ENCODE measurements at regions of chr4 and their contacts with region 1.

Region 1: GRCh38 chr4:127788517-127788916 is 6.4 kb downstream of the HSPA4L start:
- DNase-seq: no peak
- H3K4me3 ChIP-seq: no peak overlapping the region
- H3K27ac ChIP-seq: no peak overlapping the region
- H3K4me1 ChIP-seq: peaks cover 0 to 10% (median 0%) of the 10 kb centered on the region in 4 donors
- H3K27me3 ChIP-seq: no peaks in the 10 kb centered on the region
- CTCF ChIP-seq: no peak

Region 2: DNA sequence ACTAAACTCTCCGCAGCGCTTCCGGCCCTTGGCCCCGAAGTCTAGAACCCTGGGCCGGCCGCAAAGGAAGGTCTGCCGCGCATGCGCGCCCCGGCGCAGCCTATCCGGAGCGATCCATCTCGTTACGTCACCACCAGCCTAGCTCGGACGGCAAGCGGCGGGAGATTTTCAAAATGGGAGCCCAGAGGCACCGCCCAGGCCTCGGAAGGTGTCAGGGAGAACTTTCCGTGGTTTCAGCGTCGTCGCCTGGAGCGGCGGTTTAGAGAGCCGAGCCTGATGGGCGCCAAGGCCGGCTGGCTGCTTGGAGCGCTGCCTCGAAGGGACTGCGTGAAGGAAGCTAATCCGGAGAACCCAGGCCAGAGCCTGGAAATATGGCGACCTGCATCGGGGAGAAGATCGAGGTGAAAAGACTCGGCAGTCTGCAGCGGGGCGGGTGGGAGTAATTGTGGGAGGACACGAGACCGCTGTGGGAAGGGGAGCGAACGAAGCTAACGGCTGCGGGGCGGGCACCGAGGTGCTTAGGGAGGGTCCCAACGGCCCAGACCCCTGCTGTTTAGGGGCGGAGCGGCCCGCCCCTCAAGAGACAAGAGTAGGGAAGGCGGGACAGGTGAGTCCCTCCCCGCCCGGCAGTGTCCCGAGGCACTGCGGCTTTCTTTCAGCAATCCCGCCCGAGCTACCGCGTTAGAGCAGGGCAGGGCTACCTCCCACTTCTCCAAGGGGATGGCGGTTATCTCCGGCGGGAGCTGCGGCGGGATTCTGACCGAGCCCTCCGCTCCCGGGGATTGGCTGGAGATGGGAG is 92.4 kb after region 1 on chr4 and contains the start of gene PLK4:
- intact Hi-C with region 1: loop called (anchors 5 kb)
- DNase-seq: peak; percentile 92 to 95
- H3K4me3 ChIP-seq: peak within 1 kb of the TSS; percentile 63 to 98
- H3K27ac ChIP-seq: peak within 1 kb of the TSS; percentile 70 to 81
- H3K4me1 ChIP-seq: peaks cover 0 to 11% (median 7%) of the 10 kb centered on the region in 4 donors
- H3K27me3 ChIP-seq: no peaks in the 10 kb centered on the region
- CTCF ChIP-seq: no peak

Measured in tibial artery (tissue), 4 donors.